B cell (primary cell): ENCODE measurements at regions of chr10 and their contacts with region 1.

Region 1: DNA sequence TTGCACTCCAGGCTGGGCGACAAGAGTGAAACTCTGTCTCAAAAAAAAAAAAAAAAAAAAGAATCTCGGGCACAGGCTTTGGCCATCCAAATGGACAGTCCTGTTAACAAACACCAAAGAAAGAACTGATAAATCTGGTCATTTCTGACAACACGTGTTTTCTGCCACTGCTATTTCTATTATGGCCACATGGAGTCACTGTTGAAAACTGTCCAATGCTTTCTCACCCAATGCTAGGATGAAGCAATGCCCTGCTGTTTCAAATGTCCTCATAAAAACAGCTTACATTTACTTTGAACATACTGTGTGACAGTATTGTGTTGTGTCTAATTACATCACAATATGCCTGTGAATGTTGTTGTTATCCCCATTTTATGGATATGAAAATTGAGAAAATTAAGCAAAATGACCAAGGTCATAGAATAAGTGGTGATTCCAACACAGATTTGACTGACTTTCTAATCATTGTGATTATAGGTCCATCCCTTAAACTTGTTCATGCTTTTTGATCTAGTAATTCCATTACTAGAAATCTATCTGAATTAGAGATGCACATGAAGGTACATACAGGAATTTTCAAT is 19.9 kb upstream of the MAP3K8 start:
- DNase-seq: peak; percentile 79
- ATAC-seq: peak; percentile 64
- H3K4me3 ChIP-seq: no peak overlapping the region
- H3K4me3 Mint-ChIP-seq: no peak overlapping the region
- H3K27ac ChIP-seq: peak overlapping the region in 1 of 2 donors; percentile 55
- H3K27ac Mint-ChIP-seq: peak overlapping the region; percentile 71
- H3K4me1 ChIP-seq: peaks cover 34 to 35% of the 10 kb centered on the region in 2 donors
- H3K4me1 Mint-ChIP-seq: peaks cover 43% of the 10 kb centered on the region
- H3K27me3 ChIP-seq: no peaks in the 10 kb centered on the region
- H3K27me3 Mint-ChIP-seq: no peaks in the 10 kb centered on the region
- CTCF ChIP-seq: peak; percentile 85

Region 2: GRCh38 chr10:30392564-30392990 is 21.5 kb before region 1 on chr10:
- CTCF ChIA-PET with region 1: interaction called, 14 read pairs
- POLR2A ChIA-PET with region 1: no interaction called
- intact Hi-C with region 1: loop called (anchors 1 kb)
- DNase-seq: peak; percentile 82
- ATAC-seq: peak; percentile 100
- H3K4me3 ChIP-seq: no peak overlapping the region
- H3K4me3 Mint-ChIP-seq: no peak overlapping the region
- H3K27ac ChIP-seq: no peak overlapping the region
- H3K27ac Mint-ChIP-seq: no peak overlapping the region
- H3K4me1 ChIP-seq: peaks cover 4 to 5% of the 10 kb centered on the region in 2 donors
- H3K4me1 Mint-ChIP-seq: peaks cover 3% of the 10 kb centered on the region
- H3K27me3 ChIP-seq: no peaks in the 10 kb centered on the region
- H3K27me3 Mint-ChIP-seq: peaks cover 15% of the 10 kb centered on the region
- CTCF ChIP-seq: peak; percentile 97

Region 3: DNA sequence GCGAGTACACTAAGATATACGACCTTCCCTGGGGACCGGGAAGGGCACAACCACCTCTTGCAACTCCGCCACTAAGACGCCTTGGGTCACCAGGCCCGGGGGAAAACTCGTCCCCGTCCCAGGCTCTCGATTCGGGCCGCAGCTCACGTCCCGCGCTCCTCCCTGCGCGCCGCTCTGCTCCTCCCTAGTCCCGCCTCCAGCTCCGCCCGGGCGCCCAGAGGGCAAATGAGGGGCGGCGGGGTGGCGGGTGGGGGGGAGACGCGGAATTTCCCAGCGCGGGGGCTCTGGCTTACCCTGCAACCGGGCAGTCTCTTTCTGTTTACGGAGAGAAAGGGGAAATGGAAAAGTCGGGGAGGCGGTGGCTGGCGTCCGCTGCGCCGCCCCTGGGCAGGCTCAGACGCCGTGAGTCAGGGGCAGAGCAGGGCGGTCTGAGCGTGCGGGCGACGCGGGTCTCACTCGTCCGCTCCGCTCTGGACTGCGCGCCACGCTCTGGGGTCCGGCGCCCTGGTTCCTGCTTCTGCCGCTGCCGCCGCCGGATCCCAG is 19.7 kb after region 1 on chr10 and contains the start of gene MAP3K8:
- CTCF ChIA-PET with region 1: interaction called, 50 read pairs
- POLR2A ChIA-PET with region 1: interaction called, 12 read pairs
- intact Hi-C with region 1: loop called (anchors 1 kb)
- DNase-seq: peak; percentile 96
- ATAC-seq: peak; percentile 73
- H3K4me3 ChIP-seq: peak within 1 kb of the TSS; percentile 93 to 99 (median 97)
- H3K4me3 Mint-ChIP-seq: peak within 1 kb of the TSS; percentile 98
- H3K27ac ChIP-seq: peak within 1 kb of the TSS; percentile 95 to 99
- H3K27ac Mint-ChIP-seq: peak within 1 kb of the TSS; percentile 97
- H3K4me1 ChIP-seq: peaks cover 56 to 74% of the 10 kb centered on the region in 2 donors
- H3K4me1 Mint-ChIP-seq: peaks cover 71% of the 10 kb centered on the region
- H3K27me3 ChIP-seq: no peaks in the 10 kb centered on the region
- H3K27me3 Mint-ChIP-seq: no peaks in the 10 kb centered on the region
- CTCF ChIP-seq: no peak
- total RNA-seq, gene MAP3K8: 97.0 and 104 TPM in 2 replicates

Region 4: DNA sequence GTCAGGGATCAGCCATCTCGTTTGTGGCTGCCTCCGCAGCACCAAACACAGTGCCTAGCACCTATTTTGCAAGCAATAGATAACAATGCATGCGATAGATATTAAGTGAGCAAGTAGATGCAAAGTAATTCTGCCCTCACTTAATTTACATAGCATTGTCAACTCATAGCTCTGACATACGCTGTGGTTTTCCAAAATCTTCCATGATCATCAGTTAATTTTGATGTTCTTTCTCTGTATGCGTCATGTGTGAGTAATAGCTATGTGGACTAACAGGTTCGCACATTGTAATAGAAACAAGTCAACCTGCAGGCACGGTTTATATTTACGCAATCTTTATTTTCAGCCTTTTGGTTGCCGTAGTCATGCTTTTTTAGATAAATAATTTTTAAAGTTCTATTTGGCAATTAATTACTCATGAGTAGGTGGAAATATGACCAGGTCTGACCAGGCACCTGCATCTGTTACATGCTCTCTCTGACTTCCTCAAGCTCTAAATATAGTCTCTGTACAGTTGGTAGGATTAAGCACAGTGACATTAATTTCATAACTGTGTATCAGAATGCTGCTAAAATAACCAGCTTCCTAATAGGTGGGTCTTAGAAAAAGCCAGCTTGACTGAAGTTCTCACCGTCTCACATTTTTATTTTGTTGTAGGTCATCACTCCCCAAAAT is 33.2 kb after region 1 on chr10:
- CTCF ChIA-PET with region 1: interaction called, 7 read pairs
- POLR2A ChIA-PET with region 1: interaction called, 3 read pairs
- intact Hi-C with region 1: loop called (anchors 5 kb)
- DNase-seq: no peak
- ATAC-seq: no peak
- H3K4me3 ChIP-seq: no peak overlapping the region
- H3K4me3 Mint-ChIP-seq: peak overlapping the region; percentile 16
- H3K27ac ChIP-seq: peak overlapping the region; percentile 9 to 49
- H3K27ac Mint-ChIP-seq: peak overlapping the region; percentile 28
- H3K4me1 ChIP-seq: peaks cover 34% of the 10 kb centered on the region in 2 donors
- H3K4me1 Mint-ChIP-seq: peaks cover 51% of the 10 kb centered on the region
- H3K27me3 ChIP-seq: no peaks in the 10 kb centered on the region
- H3K27me3 Mint-ChIP-seq: no peaks in the 10 kb centered on the region
- CTCF ChIP-seq: no peak

Region 5: GRCh38 chr10:30583778-30584415 is 169.8 kb after region 1 on chr10:
- CTCF ChIA-PET with region 1: interaction called, 6 read pairs
- POLR2A ChIA-PET with region 1: no interaction called
- intact Hi-C with region 1: loop called (anchors 1 kb)
- DNase-seq: peak; percentile 27
- ATAC-seq: no peak
- H3K4me3 ChIP-seq: peak overlapping the region in 4 of 5 experiments; percentile 24 to 51 (median 49)
- H3K4me3 Mint-ChIP-seq: peak overlapping the region; percentile 63
- H3K27ac ChIP-seq: no peak overlapping the region
- H3K27ac Mint-ChIP-seq: no peak overlapping the region
- H3K4me1 ChIP-seq: peaks cover 24 to 27% of the 10 kb centered on the region in 2 donors
- H3K4me1 Mint-ChIP-seq: peaks cover 27% of the 10 kb centered on the region
- H3K27me3 ChIP-seq: no peaks in the 10 kb centered on the region
- H3K27me3 Mint-ChIP-seq: no peaks in the 10 kb centered on the region
- CTCF ChIP-seq: no peak